ENCODE measurements at regions of chr11 and their contacts with region 1.

Region 1: GRCh38 chr11:43825217-43825816 is 55.3 kb upstream of the ALKBH3 start:
- DNase-seq: peak; percentile 46
- H3K4me3 ChIP-seq: no peak overlapping the region; a peak in 1 of 4 replicates
- H3K27ac ChIP-seq: no peak overlapping the region
- H3K4me1 ChIP-seq: peaks cover 0 to 5% of the 10 kb centered on the region in 2 experiments; a peak in 1 of 4 replicates
- H3K27me3 ChIP-seq: no peaks in the 10 kb centered on the region
- CTCF ChIP-seq: peak; percentile 97
- EP300 ChIP-seq: no peak
- RAD21 ChIP-seq: peak; percentile 76

Region 2: GRCh38 chr11:43723617-43724016 is 101.7 kb before region 1 on chr11:
- CTCF ChIA-PET with region 1: no interaction called
- POLR2A ChIA-PET with region 1: no interaction called
- DNase-seq: no peak
- H3K4me3 ChIP-seq: no peak overlapping the region
- H3K27ac ChIP-seq: no peak overlapping the region
- H3K4me1 ChIP-seq: no peaks in the 10 kb centered on the region
- H3K27me3 ChIP-seq: no peaks in the 10 kb centered on the region
- CTCF ChIP-seq: no peak
- EP300 ChIP-seq: no peak
- RAD21 ChIP-seq: no peak

Region 3: DNA sequence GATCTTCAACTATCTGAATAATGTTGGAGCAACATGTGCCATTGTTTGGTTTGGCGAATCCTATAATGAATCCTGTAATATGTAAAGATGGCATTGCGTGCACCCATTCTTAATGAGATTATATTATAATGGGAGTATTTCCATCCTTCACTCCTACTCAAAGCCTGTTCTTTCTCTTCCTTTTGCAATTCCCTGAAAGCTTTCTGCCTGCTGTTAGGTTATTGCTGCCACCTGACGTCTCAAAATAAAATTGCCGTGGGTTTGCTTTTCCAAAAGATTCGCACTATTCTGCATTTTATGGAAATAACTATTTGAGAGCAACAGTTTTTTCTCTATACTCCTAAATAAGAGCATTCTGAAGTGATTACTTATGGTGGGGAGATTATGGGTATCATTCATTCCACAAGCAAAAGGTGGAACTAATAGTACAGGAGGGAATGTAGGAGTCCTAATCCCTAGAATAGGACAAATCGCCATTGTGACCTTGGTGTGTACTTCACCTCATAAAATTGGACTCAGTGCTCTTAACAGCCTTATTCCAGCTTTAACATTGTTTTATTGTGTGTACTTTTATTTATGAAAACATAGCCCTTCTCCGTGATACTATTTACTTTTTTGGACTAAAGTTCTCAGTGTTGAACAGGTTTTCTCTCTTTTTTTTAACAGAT is 14.3 kb before region 1 on chr11:
- CTCF ChIA-PET with region 1: interaction called, 15 read pairs
- POLR2A ChIA-PET with region 1: interaction called, 3 read pairs
- DNase-seq: no peak
- H3K4me3 ChIP-seq: no peak overlapping the region
- H3K27ac ChIP-seq: no peak overlapping the region
- H3K4me1 ChIP-seq: peaks cover 3 to 8% of the 10 kb centered on the region in 2 experiments; a peak in 3 of 4 replicates
- H3K27me3 ChIP-seq: no peaks in the 10 kb centered on the region
- CTCF ChIP-seq: peak; percentile 65
- EP300 ChIP-seq: no peak
- RAD21 ChIP-seq: peak; percentile 80

Region 4: DNA sequence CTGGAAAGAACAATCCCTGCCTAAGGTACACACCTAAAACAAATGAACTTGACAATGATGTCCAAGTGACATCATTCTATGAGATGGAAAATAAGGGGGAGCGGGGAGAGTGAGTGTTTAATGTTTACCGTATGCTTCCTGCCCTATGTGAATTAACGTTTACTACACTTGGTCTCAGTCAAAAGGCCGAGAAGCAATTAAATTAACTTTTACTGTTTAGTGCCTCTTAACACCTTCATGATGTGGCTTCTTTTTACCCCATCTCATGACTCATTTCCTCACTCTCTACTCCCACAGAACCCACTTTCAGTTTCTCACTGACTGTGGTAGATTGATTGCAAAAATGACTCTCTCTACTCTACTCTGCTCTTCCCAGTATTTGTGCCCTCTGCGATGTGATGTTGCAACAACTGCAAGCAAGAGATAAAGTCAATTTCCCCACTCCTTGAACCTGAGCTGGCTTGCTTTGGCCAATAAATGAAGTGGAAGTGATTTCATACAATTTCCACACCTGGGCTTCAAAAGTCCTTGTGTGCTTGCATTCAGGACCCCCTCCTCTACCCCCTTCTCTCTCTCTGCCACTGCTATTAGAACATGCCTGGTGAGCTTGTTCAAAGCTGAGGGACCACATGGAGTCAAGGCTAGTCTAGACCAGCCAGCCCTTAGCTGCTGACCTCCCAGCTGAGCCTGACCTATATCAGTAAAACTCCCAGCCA is 43.7 kb after region 1 on chr11:
- CTCF ChIA-PET with region 1: interaction called, 10 read pairs
- POLR2A ChIA-PET with region 1: no interaction called
- DNase-seq: no peak
- H3K4me3 ChIP-seq: no peak overlapping the region
- H3K27ac ChIP-seq: no peak overlapping the region
- H3K4me1 ChIP-seq: no peaks in the 10 kb centered on the region
- H3K27me3 ChIP-seq: no peaks in the 10 kb centered on the region
- CTCF ChIP-seq: no peak
- EP300 ChIP-seq: no peak
- RAD21 ChIP-seq: no peak

Region 5: DNA sequence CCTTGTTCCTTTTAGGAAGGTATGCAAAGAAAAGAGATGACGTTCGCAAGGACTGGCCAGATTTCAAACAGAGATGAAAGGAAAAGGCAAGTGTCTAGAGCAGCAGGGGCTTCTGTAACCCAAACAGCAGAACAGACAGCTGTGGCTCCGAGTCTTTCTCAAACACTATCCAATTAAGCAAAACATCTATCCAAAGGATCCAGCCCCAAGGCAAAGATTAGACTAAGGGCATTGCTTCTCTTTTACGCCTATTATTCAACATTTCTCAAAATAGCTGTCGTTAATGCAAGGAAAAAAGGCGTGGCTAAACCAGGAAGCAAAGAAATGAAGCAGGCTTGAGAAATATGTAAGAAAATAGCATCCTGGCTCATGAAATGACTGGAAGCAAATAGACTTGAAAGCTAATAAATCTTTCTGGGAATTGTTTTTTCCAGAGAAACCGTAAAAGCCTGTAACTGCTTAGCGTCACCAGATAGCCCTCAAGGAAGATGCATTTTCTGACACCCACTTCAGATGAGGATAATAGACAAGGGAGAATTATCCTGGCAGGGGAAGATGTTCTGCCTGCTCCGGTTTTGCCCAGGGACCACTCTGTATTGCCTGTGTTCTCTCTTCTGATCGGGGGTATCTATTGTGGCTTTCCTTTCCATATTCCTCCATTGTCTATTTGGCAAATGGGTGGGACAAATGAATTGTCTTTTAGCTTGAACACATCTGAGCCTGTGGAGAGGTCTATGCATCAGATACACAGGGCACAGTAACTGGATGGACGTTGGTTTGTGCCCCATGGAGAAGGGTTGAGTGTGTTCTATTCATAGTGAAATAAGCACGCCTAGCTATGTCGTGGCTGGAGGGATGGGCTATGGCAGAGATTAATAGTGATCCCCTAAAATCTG is 137.3 kb after region 1 on chr11:
- CTCF ChIA-PET with region 1: no interaction called
- POLR2A ChIA-PET with region 1: no interaction called
- DNase-seq: peak; percentile 60
- H3K4me3 ChIP-seq: peak overlapping the region in 1 of 2 experiments; percentile 9; a peak in 2 of 4 replicates
- H3K27ac ChIP-seq: peak overlapping the region in 1 of 2 experiments; percentile 90; a peak in 2 of 4 replicates
- H3K4me1 ChIP-seq: peaks cover 0 to 28% of the 10 kb centered on the region in 2 experiments; a peak in 3 of 4 replicates
- H3K27me3 ChIP-seq: no peaks in the 10 kb centered on the region
- CTCF ChIP-seq: no peak
- EP300 ChIP-seq: peak in 1 of 2 experiments; percentile 87; a peak in 2 of 4 replicates
- RAD21 ChIP-seq: 0 out of 2 replicates have a peak, but pooled peaks have one; percentile 16

Measured in SK-N-SH (cell line).